ENCODE measurements at regions of chr10 and their contacts with region 1.

Region 1: GRCh38 chr10:100433253-100434240 is 29.3 kb upstream of the WNT8B start:
- H3K4me3 ChIP-seq: no peak overlapping the region
- H3K27ac ChIP-seq: no peak overlapping the region
- H3K4me1 ChIP-seq: no peaks in the 10 kb centered on the region
- CTCF ChIP-seq: peak; percentile 99

Region 2: DNA sequence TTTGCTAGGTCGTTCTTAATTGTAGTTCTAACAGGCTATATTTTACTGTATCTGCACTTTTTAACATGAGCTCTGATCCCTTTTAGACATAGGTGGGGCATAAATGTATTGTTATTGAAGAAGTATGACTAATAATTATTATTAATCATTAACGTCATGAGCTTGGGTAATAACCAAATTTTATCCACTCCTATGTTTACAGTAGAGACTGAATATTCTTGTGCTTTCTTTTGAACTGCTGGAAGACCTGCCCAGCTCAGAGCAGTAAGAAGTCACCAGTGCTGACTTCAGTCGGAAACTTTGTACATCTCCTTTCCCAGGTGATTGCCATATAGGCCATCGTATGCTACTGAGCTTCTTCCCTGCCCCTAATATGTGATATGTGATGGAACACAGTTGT is 122.2 kb before region 1 on chr10:
- CTCF ChIA-PET with region 1: interaction called, 23 read pairs
- POLR2A ChIA-PET with region 1: no interaction called
- H3K4me3 ChIP-seq: no peak overlapping the region
- H3K27ac ChIP-seq: no peak overlapping the region
- H3K4me1 ChIP-seq: no peaks in the 10 kb centered on the region
- CTCF ChIP-seq: no peak

Region 3: GRCh38 chr10:100346765-100347567 is 86.6 kb before region 1 on chr10 and contains the start of gene SCD:
- CTCF ChIA-PET with region 1: interaction called, 342 read pairs
- POLR2A ChIA-PET with region 1: interaction called, 3 read pairs
- H3K4me3 ChIP-seq: peak within 1 kb of the TSS; percentile 77
- H3K27ac ChIP-seq: peak within 1 kb of the TSS; percentile 99
- H3K4me1 ChIP-seq: peaks cover 21% of the 10 kb centered on the region
- CTCF ChIP-seq: no peak

Region 4: GRCh38 chr10:100373298-100374136 is 60.0 kb before region 1 on chr10:
- CTCF ChIA-PET with region 1: interaction called, 13 read pairs
- POLR2A ChIA-PET with region 1: no interaction called
- H3K4me3 ChIP-seq: peak overlapping the region; percentile 49
- H3K27ac ChIP-seq: peak overlapping the region; percentile 97
- H3K4me1 ChIP-seq: peaks cover 21% of the 10 kb centered on the region
- CTCF ChIP-seq: no peak

Region 5: GRCh38 chr10:100470367-100470766 is 36.8 kb after region 1 on chr10:
- CTCF ChIA-PET with region 1: interaction called, 14 read pairs
- POLR2A ChIA-PET with region 1: no interaction called
- H3K4me3 ChIP-seq: no peak overlapping the region
- H3K27ac ChIP-seq: no peak overlapping the region
- H3K4me1 ChIP-seq: no peaks in the 10 kb centered on the region
- CTCF ChIP-seq: no peak

Region 6: GRCh38 chr10:100508691-100509150 is 75.2 kb after region 1 on chr10:
- CTCF ChIA-PET with region 1: interaction called, 97 read pairs
- POLR2A ChIA-PET with region 1: no interaction called
- H3K4me3 ChIP-seq: no peak overlapping the region
- H3K27ac ChIP-seq: no peak overlapping the region
- H3K4me1 ChIP-seq: no peaks in the 10 kb centered on the region
- CTCF ChIP-seq: peak; percentile 69

Region 7: GRCh38 chr10:100621360-100622205 is 188.0 kb after region 1 on chr10:
- CTCF ChIA-PET with region 1: no interaction called
- POLR2A ChIA-PET with region 1: no interaction called
- H3K4me3 ChIP-seq: no peak overlapping the region
- H3K27ac ChIP-seq: no peak overlapping the region
- H3K4me1 ChIP-seq: no peaks in the 10 kb centered on the region
- CTCF ChIP-seq: no peak

Region 8: DNA sequence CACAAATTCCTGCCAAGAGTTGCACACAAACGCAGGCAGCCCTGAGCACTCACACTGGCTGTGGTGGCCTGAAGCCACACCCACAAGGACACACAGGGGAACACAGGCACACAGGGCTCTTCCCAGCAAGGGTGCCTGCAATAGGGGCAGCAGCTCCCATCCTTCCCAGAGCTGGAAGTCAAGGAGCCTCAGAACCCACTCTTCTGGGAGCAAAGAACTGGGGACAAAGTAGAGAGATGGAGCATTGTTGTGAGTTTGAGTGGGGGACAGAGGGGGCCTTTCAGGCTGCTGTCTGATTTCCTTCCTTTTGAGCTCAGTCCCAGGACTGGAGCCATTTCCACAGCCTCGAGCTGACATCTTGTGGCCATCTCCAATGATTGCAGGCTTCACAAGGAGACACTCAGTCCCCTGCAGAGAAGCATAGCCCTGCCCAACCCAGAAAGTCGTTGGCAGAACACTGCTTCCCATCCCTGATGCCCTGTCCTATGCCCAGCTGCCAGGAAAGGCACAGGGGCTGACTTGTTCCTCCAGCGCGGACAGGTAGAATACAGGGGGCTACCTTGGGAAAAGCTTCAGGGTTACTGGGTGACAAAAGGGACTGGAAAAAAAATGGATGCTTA is 444.9 kb after region 1 on chr10:
- CTCF ChIA-PET with region 1: interaction called, 21 read pairs
- POLR2A ChIA-PET with region 1: no interaction called
- H3K4me3 ChIP-seq: no peak overlapping the region
- H3K27ac ChIP-seq: no peak overlapping the region
- H3K4me1 ChIP-seq: no peaks in the 10 kb centered on the region
- CTCF ChIP-seq: peak; percentile 88

Measured in HEK293 (cell line).